ENCODE measurements at regions of chr22 and their contacts with region 1.

Region 1: GRCh38 chr22:35467681-35468434 is 67.9 kb downstream of the MCM5 start:
- DNase-seq: peak; percentile 82

Region 2: GRCh38 chr22:35212009-35212408 is 255.8 kb before region 1 on chr22:
- intact Hi-C with region 1: no loop called
- DNase-seq: no peak

Region 3: DNA sequence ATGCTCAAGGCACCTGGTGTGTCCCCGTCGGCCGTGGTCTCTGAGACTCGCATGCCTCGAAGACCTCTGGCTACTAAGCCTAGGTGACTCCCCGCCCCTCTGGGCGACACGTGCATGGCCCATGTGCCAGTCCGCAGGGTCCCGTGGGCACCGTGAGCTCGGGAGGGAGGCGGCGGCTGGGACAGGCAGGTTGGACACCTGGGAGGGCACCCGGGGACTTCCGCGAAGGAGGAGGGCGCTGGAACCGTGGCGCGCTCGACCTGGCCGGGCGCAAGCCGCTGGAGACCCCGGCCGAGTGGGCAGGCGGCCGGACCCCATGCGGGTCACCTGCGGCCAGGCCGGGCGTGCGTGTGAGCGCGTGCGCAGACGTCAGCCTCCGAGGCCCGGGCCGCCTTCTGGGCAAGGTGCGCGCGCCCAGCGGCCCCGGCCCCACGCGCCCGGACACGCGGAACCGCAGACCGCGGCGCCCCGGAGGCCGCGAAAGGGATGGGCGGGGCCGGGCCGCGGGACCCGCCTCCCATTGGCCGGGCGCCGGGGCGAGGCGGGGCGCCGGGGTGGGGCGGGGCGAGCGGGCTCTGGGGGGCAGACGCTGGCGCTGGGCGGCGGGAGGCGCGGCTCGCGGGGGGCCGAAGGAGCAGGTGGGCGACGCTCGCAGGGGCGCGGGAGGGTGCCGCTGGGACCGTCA is 72.2 kb after region 1 on chr22:
- intact Hi-C with region 1: loop called (anchors 5 kb)
- DNase-seq: peak; percentile 79

Measured in cardiac septum (tissue), 1 donor.